ENCODE measurements at regions of chr17 and their contacts with region 1.

Region 1: DNA sequence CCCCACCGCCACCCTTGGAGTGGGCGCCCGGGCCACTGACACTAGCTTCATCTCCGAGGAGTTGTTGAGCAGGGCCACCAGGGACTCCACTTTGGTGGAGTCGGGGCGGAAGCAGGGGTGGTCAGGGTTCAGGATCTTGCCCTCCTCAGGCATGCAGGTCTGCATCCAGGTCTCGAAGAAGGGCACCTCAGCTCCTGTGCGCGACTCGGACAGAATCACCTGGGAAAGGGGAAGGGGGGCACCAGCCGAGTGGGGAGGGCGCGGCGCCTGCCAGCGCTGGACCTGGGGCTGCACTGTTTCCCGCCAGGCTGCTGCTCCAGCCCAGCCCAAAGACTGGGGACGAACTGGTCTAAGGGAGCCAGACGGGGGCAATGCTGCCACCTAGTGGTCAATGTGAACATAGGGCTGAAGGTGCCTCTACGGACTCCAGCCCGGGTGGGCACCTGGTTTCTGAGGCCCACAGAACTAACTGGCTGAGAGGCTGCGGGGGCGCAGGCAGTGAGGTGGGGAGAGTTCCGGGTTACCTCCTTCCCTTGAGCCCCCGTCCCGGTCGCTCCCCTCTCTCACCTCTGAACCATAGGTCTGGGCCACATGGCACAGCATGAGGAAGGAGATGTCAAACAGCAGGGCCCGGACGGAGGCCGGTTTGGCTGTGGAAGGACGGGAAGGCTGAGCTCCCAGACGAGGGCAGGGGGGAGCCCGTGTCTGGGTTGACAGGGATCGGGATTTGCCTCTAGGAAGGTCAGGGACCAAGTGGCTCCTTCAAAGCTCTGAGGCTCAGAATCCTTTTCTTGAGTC is 11.8 kb downstream of the CSF3 start:
- DNase-seq: peak; percentile 81
- H3K4me3 Mint-ChIP-seq: no peak overlapping the region
- H3K27ac Mint-ChIP-seq: no peak overlapping the region
- H3K4me1 Mint-ChIP-seq: peaks cover 25% of the 10 kb centered on the region
- H3K27me3 Mint-ChIP-seq: no peaks in the 10 kb centered on the region

Region 2: GRCh38 chr17:39769974-39770587 is 256.9 kb before region 1 on chr17:
- CTCF ChIA-PET with region 1: no interaction called
- POLR2A ChIA-PET with region 1: no interaction called
- DNase-seq: peak; percentile 70
- H3K4me3 Mint-ChIP-seq: peak overlapping the region; percentile 9
- H3K27ac Mint-ChIP-seq: peak overlapping the region; percentile 87
- H3K4me1 Mint-ChIP-seq: peaks cover 90% of the 10 kb centered on the region
- H3K27me3 Mint-ChIP-seq: no peaks in the 10 kb centered on the region

Region 3: GRCh38 chr17:39927101-39927928 is 99.7 kb before region 1 on chr17 and contains the starts of genes LRRC3C and ORMDL3:
- CTCF ChIA-PET with region 1: no interaction called
- POLR2A ChIA-PET with region 1: no interaction called
- DNase-seq: peak; percentile 93
- H3K4me3 Mint-ChIP-seq: peak within 1 kb of the TSS; percentile 83
- H3K27ac Mint-ChIP-seq: peak within 1 kb of the TSS; percentile 95
- H3K4me1 Mint-ChIP-seq: peaks cover 62% of the 10 kb centered on the region
- H3K27me3 Mint-ChIP-seq: no peaks in the 10 kb centered on the region
- total RNA-seq, gene LRRC3C: not detected
- total RNA-seq, gene ORMDL3: 104 to 111 TPM

Region 4: DNA sequence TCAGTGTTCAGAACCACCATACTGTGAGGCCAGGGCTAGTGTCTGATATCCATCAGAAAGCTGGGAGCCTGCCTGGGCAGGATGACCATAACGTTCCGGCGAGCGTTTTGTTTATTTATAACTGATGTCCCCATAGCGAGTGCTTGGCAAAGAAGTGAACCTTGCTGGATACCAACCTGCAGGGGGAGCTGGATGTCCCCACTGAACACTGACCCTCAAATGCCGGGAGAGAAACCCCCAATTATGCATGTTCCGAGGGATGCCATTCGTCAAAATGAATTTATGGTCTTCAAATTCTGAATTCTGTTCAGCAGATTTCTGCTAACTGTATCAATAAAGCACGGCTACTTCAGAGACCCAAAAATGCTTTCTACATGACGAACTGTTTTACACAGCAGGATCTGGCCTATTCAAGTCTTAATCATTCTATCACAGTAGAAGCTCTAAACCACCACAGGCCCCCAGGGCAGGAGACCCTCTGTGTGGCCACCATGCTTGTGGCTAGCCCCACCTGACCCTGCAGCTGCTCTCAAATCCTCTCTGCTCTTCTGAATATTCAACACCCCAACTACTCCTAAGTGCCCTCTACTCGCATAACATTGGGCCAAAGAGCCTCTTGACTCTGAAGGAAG is 12.0 kb after region 1 on chr17:
- CTCF ChIA-PET with region 1: interaction called, 27 read pairs
- POLR2A ChIA-PET with region 1: interaction called, 4 read pairs
- DNase-seq: no peak
- H3K4me3 Mint-ChIP-seq: no peak overlapping the region
- H3K27ac Mint-ChIP-seq: no peak overlapping the region
- H3K4me1 Mint-ChIP-seq: no peaks in the 10 kb centered on the region
- H3K27me3 Mint-ChIP-seq: no peaks in the 10 kb centered on the region

Region 5: GRCh38 chr17:40062329-40063186 is 35.5 kb after region 1 on chr17 and contains the start of gene THRA:
- CTCF ChIA-PET with region 1: interaction called, 11 read pairs
- POLR2A ChIA-PET with region 1: no interaction called
- DNase-seq: peak; percentile 69
- H3K4me3 Mint-ChIP-seq: peak within 1 kb of the TSS; percentile 78
- H3K27ac Mint-ChIP-seq: peak within 1 kb of the TSS; percentile 35
- H3K4me1 Mint-ChIP-seq: peaks cover 35% of the 10 kb centered on the region
- H3K27me3 Mint-ChIP-seq: peaks cover 48% of the 10 kb centered on the region
- total RNA-seq, gene THRA: 8.4 TPM

Region 6: DNA sequence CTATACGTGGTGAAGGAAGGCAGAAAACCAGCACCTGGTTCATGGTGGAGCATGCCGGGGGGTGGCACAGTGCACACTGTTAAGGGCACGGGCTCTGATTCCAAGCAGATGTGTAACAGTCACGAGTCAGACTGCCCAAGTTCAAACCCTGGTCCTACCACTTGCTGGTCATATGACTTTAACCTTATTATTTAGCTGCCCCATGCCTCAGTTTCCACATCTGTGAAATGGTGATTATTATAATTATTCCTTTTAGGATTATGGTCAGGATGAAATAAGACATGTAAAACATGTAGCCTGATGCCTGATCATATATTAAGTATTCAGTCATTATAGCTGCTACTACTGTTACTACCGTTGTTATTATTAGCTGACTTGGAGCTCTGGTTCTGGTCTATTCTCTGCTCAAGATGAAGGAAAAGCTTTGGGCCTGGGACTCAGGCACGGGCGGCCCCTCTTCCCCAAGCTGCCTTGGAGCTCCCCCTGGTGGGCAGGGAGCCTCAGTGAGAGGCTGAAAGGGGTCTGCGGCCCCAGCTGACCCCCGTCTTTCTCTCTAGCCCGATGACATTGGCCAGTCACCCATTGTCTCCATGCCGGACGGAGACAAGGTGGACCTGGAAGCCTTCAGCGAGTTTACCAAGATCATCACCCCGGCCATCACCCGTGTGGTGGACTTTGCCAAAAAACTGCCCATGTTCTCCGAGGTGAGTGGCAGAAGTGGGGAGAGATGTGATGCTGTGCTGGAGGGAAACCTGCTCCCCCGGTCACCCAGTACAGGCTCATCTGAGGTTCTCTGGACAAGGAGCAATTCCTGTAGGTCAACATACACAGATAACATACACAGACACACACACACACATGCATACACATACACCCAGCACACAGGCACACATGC is 59.4 kb after region 1 on chr17:
- CTCF ChIA-PET with region 1: interaction called, 18 read pairs
- POLR2A ChIA-PET with region 1: interaction called, 3 read pairs
- DNase-seq: peak; percentile 54
- H3K4me3 Mint-ChIP-seq: no peak overlapping the region
- H3K27ac Mint-ChIP-seq: no peak overlapping the region
- H3K4me1 Mint-ChIP-seq: no peaks in the 10 kb centered on the region
- H3K27me3 Mint-ChIP-seq: no peaks in the 10 kb centered on the region

Region 7: DNA sequence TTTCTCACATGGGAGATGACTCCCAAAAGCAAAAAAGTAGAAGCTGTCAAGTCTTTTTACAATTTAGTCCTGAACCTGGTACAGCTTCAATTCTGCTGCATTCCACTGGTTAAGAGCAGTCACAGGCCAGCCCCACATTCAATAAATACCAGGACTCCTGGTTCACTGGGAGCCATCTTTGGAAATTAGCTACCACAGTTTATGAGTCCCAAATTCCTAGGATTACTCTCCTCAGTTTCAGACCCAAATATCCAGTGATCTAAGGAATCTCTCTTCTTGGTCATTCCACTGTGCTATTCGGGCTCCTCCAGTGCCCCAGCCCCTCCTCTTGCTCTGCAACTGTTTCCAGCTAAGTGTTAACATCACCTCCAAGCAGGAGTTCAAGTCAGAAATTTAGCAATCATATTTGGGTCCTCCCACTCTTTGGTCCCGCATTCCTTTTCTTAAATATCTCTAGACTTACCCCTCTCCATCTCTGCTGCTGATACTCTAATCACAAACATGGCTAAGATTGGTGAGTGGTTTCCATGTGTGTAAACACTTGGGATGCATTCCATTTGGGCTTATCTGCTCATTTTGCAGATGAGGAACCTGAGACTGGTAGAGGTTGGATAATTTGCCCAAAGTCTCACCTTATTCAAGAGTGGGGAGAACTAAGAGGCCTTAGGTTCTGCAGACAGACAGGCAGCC is 182.5 kb after region 1 on chr17:
- CTCF ChIA-PET with region 1: no interaction called
- POLR2A ChIA-PET with region 1: no interaction called
- DNase-seq: no peak
- H3K4me3 Mint-ChIP-seq: no peak overlapping the region
- H3K27ac Mint-ChIP-seq: no peak overlapping the region
- H3K4me1 Mint-ChIP-seq: no peaks in the 10 kb centered on the region
- H3K27me3 Mint-ChIP-seq: peaks cover 3% of the 10 kb centered on the region

Region 8: GRCh38 chr17:40317880-40318829 is 291.1 kb after region 1 on chr17:
- CTCF ChIA-PET with region 1: no interaction called
- POLR2A ChIA-PET with region 1: no interaction called
- DNase-seq: peak; percentile 94
- H3K4me3 Mint-ChIP-seq: peak overlapping the region; percentile 90
- H3K27ac Mint-ChIP-seq: peak overlapping the region; percentile 93
- H3K4me1 Mint-ChIP-seq: peaks cover 76% of the 10 kb centered on the region
- H3K27me3 Mint-ChIP-seq: no peaks in the 10 kb centered on the region